Caco-2 (cell line): ENCODE measurements at regions of chr20 and their contacts with region 1.

Region 1: GRCh38 chr20:61120595-61121515 is 131.2 kb upstream of the CDH4 start:
- DNase-seq: peak; percentile 74 to 75
- H3K4me3 ChIP-seq: no peak overlapping the region
- H3K4me3 Mint-ChIP-seq: no peak overlapping the region
- H3K27ac Mint-ChIP-seq: no peak overlapping the region
- H3K4me1 ChIP-seq: no peaks in the 10 kb centered on the region; the same call in 1 of the 2 replicates
- H3K4me1 Mint-ChIP-seq: no peaks in the 10 kb centered on the region
- H3K27me3 ChIP-seq: no peaks in the 10 kb centered on the region
- H3K27me3 Mint-ChIP-seq: peaks cover 21% of the 10 kb centered on the region
- CTCF ChIP-seq: peak; percentile 50 to 58

Region 2: GRCh38 chr20:60851826-60852704 is 268.8 kb before region 1 on chr20:
- CTCF ChIA-PET with region 1: no interaction called
- POLR2A ChIA-PET with region 1: no interaction called
- intact Hi-C with region 1: loop called (anchors 1 kb)
- DNase-seq: peak in 1 of 2 experiments; percentile 47
- H3K4me3 ChIP-seq: no peak overlapping the region
- H3K4me3 Mint-ChIP-seq: no peak overlapping the region
- H3K27ac Mint-ChIP-seq: no peak overlapping the region
- H3K4me1 ChIP-seq: no peaks in the 10 kb centered on the region
- H3K4me1 Mint-ChIP-seq: no peaks in the 10 kb centered on the region
- H3K27me3 ChIP-seq: no peaks in the 10 kb centered on the region
- H3K27me3 Mint-ChIP-seq: peaks cover 7% of the 10 kb centered on the region
- CTCF ChIP-seq: peak; percentile 49 to 76